ENCODE measurements at regions of chr2 and their contacts with region 1.

Region 1: GRCh38 chr2:105858868-105859693 is 114.4 kb downstream of the NCK2 start:
- DNase-seq: peak; percentile 53
- H3K4me3 Mint-ChIP-seq: peak overlapping the region; percentile 17
- H3K27ac Mint-ChIP-seq: peak overlapping the region; percentile 96
- H3K4me1 Mint-ChIP-seq: peaks cover 93% of the 10 kb centered on the region
- H3K27me3 Mint-ChIP-seq: no peaks in the 10 kb centered on the region

Region 2: DNA sequence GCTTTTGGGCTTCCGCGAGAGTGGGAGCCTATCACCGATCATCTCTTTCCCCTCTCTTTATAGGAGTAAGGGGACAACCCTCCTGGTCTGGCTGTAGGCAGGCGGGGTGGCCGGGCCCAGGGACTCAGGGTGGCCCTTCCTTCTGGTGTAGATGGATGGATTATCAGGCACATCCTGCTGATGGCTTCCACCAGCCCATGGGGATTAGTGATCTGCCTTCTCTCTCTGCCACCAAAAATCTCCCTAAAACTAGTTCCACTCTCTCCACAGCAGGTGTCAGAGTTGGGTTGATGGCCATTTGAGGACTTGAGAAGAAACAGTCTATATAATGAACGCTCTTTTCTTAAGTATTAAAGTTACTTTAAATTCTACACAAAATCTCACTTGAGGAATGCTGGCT is 77.0 kb before region 1 on chr2:
- CTCF ChIA-PET with region 1: interaction called, 10 read pairs
- POLR2A ChIA-PET with region 1: interaction called, 3 read pairs
- intact Hi-C with region 1: no loop called
- DNase-seq: peak; percentile 11
- H3K4me3 Mint-ChIP-seq: peak overlapping the region; percentile 47
- H3K27ac Mint-ChIP-seq: peak overlapping the region; percentile 50
- H3K4me1 Mint-ChIP-seq: peaks cover 94% of the 10 kb centered on the region
- H3K27me3 Mint-ChIP-seq: no peaks in the 10 kb centered on the region

Region 3: GRCh38 chr2:105802587-105802986 is 56.5 kb before region 1 on chr2:
- CTCF ChIA-PET with region 1: interaction called, 4 read pairs
- POLR2A ChIA-PET with region 1: interaction called, 8 read pairs
- intact Hi-C with region 1: loop called (anchors 2 kb)
- DNase-seq: peak; percentile 83
- H3K4me3 Mint-ChIP-seq: peak overlapping the region; percentile 27
- H3K27ac Mint-ChIP-seq: peak overlapping the region; percentile 87
- H3K4me1 Mint-ChIP-seq: peaks cover 97% of the 10 kb centered on the region
- H3K27me3 Mint-ChIP-seq: no peaks in the 10 kb centered on the region

Region 4: DNA sequence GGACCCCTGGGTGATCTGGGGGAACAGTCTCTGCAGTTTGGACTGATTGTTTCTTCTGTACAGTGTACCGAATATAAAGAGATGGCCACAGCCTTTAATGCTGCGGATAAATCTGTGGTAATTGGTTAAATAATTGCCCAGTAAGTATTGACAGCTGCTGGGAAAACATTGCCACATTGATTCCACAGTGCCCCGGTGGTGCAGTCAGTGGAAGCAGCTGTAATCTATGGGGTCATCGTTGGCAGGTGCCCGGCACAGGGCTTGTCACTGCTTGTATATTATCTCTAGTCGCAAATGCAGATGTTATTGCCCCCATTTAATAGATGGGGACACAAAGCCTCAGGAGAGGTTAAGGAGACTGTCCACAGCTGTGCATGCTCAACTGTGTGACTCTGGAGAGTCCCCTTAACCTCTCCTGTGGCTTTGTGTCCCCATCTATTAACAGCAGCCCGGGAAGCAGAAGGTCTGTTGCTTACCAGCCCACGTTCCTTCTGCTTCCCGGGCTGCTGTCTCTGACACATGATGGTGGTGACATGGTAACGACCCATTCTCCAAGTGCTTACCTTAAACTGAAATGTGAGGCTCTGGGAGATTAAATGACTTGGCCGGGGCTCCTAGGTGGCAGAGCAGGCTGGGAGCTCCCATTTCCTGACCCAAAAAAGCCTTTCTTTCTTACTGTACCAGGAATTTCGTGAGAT is 37.5 kb before region 1 on chr2:
- CTCF ChIA-PET with region 1: no interaction called
- POLR2A ChIA-PET with region 1: no interaction called
- intact Hi-C with region 1: no loop called
- DNase-seq: no peak
- H3K4me3 Mint-ChIP-seq: no peak overlapping the region
- H3K27ac Mint-ChIP-seq: peak overlapping the region; percentile 82
- H3K4me1 Mint-ChIP-seq: peaks cover 88% of the 10 kb centered on the region
- H3K27me3 Mint-ChIP-seq: no peaks in the 10 kb centered on the region

Region 5: DNA sequence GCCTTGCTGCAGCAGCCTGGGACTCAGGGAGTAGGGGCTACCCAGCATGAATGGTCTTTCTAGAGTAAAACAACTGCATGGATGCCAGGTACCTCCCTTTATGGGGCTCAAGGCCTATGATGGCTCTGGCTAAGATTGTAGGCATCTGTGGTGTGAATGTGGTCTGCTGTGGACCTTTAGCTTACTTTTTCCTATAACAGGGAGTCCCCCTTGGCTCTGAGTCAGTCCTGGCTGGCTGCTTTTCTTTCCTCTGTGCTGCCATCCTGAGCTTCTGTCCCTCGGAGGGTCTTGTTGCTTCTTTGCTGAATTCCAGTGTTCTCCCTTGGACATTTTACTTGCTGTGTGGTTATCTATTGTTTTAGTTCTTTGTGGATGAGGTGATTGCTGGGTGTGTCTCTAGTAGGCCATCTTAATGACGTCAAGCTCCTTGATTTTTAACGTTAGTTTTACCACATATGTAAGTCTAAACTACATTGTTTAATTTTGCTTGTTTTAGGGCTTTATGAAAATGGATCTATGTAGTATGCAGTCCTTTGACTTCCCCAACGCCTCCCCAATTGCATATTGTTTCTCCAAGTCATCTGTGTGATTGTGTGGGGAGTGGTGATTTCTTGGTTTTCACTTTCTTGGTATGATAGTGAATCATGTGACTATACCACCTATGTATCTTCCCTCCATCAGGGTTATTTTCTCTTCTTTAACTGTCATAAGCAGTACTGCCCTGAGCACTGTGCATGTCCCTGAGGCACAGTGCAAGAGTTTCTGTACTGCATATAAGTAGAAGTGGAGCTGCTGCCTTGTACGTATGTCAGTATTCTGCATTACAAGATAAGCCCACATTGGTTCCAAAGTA is 22.0 kb before region 1 on chr2:
- CTCF ChIA-PET with region 1: interaction called, 6 read pairs
- POLR2A ChIA-PET with region 1: interaction called, 7 read pairs
- intact Hi-C with region 1: loop called (anchors 1 kb)
- DNase-seq: peak; percentile 74
- H3K4me3 Mint-ChIP-seq: peak overlapping the region; percentile 37
- H3K27ac Mint-ChIP-seq: peak overlapping the region; percentile 81
- H3K4me1 Mint-ChIP-seq: peaks cover 83% of the 10 kb centered on the region
- H3K27me3 Mint-ChIP-seq: no peaks in the 10 kb centered on the region

Region 6: DNA sequence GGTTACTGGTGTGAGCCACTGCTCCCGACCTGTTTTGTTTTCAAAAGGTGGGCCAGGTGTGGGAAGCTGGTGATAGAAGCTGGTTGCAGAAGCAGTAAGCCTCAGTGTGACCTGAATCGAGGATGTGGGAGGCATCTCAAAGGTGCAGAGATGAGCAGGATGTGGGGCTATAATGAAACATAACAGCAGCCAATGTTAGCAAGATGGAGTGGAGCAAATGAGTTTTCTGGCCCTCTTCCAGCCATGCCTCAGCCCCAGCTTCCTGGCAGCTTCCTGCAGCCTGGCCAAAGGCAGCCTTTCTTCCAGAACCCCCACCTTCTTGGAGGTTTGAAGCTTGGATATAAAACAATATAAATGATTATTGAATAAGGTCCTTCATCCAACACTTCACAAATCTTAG is 70.4 kb after region 1 on chr2:
- CTCF ChIA-PET with region 1: interaction called, 3 read pairs
- POLR2A ChIA-PET with region 1: interaction called, 3 read pairs
- intact Hi-C with region 1: loop called (anchors 5 kb)
- DNase-seq: peak; percentile 76
- H3K4me3 Mint-ChIP-seq: no peak overlapping the region
- H3K27ac Mint-ChIP-seq: peak overlapping the region; percentile 74
- H3K4me1 Mint-ChIP-seq: peaks cover 45% of the 10 kb centered on the region
- H3K27me3 Mint-ChIP-seq: no peaks in the 10 kb centered on the region